ENCODE measurements at regions of chr19 and their contacts with region 1.

Region 1: GRCh38 chr19:12681074-12681951 is at the start of gene DHPS:
- DNase-seq: peak; percentile 94
- ATAC-seq: peak; percentile 90
- H3K4me3 Mint-ChIP-seq: peak within 1 kb of the TSS; percentile 99
- H3K27ac Mint-ChIP-seq: peak within 1 kb of the TSS; percentile 97
- H3K4me1 Mint-ChIP-seq: peaks cover 23% of the 10 kb centered on the region
- H3K27me3 Mint-ChIP-seq: no peaks in the 10 kb centered on the region
- total RNA-seq, gene DHPS: 101 to 112 TPM

Region 2: DNA sequence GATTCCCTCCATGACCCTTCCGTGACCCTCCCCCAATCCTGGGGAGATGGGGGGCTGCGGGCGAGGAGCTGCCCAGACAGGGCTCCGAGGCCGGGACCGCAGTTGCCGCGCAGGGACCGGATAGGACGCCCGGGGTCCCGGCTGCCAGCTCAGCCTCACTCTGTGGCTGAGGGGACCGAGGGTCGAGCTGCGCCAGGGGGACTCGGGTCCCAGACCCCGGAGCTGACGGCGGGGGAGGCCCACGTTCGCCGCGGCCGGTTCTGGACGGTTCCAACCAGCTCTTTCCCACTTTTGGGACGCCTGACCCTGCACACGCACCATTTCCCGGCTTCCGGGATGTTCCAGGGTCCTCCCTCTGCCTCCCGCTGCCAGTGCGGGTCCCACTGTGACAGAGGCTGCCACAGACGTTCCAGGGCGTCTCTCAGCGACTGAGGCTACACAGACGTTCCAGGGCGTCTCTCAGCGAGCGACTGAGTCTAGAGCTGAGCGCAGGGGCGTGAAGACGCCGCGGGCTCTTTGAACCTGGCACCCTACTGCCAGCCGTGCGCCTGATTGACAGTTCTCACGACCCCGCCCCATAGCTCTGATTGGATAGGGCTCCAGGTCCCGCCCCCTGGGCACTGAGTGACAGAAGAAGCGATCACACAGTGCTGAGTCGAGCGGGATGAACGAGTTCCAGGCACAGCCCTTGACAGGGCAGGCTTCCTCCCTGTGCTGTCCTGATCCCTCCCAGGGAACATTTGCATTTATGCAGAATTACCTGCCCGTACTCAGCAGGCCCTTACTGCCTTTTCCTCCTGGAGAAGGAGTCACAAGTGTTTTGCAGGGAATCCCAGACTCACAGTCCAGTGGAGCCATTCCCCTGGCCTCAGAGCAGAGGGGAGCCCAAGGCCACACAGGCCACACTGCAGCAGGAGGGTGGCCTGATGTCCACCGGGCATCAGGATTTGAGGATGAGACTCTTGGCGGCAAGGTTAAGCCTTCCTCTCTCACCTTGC is 347.9 kb before region 1 on chr19 and contains the start of gene ZNF563:
- CTCF ChIA-PET with region 1: no interaction called
- POLR2A ChIA-PET with region 1: no interaction called
- intact Hi-C with region 1: loop called in 1 of 2 experiments (anchors 1 kb)
- DNase-seq: peak; percentile 99
- ATAC-seq: peak; percentile 93
- H3K4me3 Mint-ChIP-seq: peak within 1 kb of the TSS; percentile 78
- H3K27ac Mint-ChIP-seq: peak within 1 kb of the TSS; percentile 98
- H3K4me1 Mint-ChIP-seq: peaks cover 32% of the 10 kb centered on the region
- H3K27me3 Mint-ChIP-seq: no peaks in the 10 kb centered on the region
- total RNA-seq, gene ZNF563: 6.6 to 6.7 TPM

Region 3: GRCh38 chr19:12610540-12611360 is 70.6 kb before region 1 on chr19 and contains the starts of genes ZNF490 and ZNF791:
- CTCF ChIA-PET with region 1: no interaction called
- POLR2A ChIA-PET with region 1: interaction called, 6 read pairs
- intact Hi-C with region 1: loop called in 1 of 2 experiments (anchors 1 kb)
- DNase-seq: peak; percentile 98
- ATAC-seq: peak; percentile 91
- H3K4me3 Mint-ChIP-seq: peak within 1 kb of the TSS; percentile 94
- H3K27ac Mint-ChIP-seq: peak within 1 kb of the TSS; percentile 99
- H3K4me1 Mint-ChIP-seq: peaks cover 31% of the 10 kb centered on the region
- H3K27me3 Mint-ChIP-seq: no peaks in the 10 kb centered on the region
- total RNA-seq, gene ZNF490: 7.7 to 8.7 TPM
- total RNA-seq, gene ZNF791: 16.1 to 18.1 TPM

Region 4: GRCh38 chr19:12696366-12697335 is 15.3 kb after region 1 on chr19 and contains the start of gene FBXW9:
- CTCF ChIA-PET with region 1: interaction called, 3 read pairs
- POLR2A ChIA-PET with region 1: interaction called, 6 read pairs
- intact Hi-C with region 1: loop called (anchors 1 kb)
- DNase-seq: peak; percentile 98
- ATAC-seq: peak; percentile 91
- H3K4me3 Mint-ChIP-seq: peak within 1 kb of the TSS; percentile 75
- H3K27ac Mint-ChIP-seq: peak within 1 kb of the TSS; percentile 94
- H3K4me1 Mint-ChIP-seq: peaks cover 11% of the 10 kb centered on the region
- H3K27me3 Mint-ChIP-seq: no peaks in the 10 kb centered on the region
- total RNA-seq, gene FBXW9: 8.3 to 8.8 TPM

Region 5: GRCh38 chr19:12796146-12797071 is 115.1 kb after region 1 on chr19:
- CTCF ChIA-PET with region 1: interaction called, 13 read pairs
- POLR2A ChIA-PET with region 1: interaction called, 13 read pairs
- intact Hi-C with region 1: loop called in 1 of 2 experiments (anchors 1 kb)
- DNase-seq: peak; percentile 87
- ATAC-seq: peak; percentile 14
- H3K4me3 Mint-ChIP-seq: peak overlapping the region; percentile 63
- H3K27ac Mint-ChIP-seq: peak overlapping the region; percentile 84
- H3K4me1 Mint-ChIP-seq: peaks cover 35% of the 10 kb centered on the region
- H3K27me3 Mint-ChIP-seq: no peaks in the 10 kb centered on the region

Region 6: GRCh38 chr19:12847159-12848139 is 166.1 kb after region 1 on chr19:
- CTCF ChIA-PET with region 1: interaction called, 4 read pairs
- POLR2A ChIA-PET with region 1: no interaction called
- intact Hi-C with region 1: loop called in 1 of 2 experiments (anchors 1 kb)
- DNase-seq: peak; percentile 94
- ATAC-seq: peak; percentile 98
- H3K4me3 Mint-ChIP-seq: peak overlapping the region; percentile 57
- H3K27ac Mint-ChIP-seq: no peak overlapping the region
- H3K4me1 Mint-ChIP-seq: peaks cover 7% of the 10 kb centered on the region
- H3K27me3 Mint-ChIP-seq: peaks cover 24% of the 10 kb centered on the region

Region 7: DNA sequence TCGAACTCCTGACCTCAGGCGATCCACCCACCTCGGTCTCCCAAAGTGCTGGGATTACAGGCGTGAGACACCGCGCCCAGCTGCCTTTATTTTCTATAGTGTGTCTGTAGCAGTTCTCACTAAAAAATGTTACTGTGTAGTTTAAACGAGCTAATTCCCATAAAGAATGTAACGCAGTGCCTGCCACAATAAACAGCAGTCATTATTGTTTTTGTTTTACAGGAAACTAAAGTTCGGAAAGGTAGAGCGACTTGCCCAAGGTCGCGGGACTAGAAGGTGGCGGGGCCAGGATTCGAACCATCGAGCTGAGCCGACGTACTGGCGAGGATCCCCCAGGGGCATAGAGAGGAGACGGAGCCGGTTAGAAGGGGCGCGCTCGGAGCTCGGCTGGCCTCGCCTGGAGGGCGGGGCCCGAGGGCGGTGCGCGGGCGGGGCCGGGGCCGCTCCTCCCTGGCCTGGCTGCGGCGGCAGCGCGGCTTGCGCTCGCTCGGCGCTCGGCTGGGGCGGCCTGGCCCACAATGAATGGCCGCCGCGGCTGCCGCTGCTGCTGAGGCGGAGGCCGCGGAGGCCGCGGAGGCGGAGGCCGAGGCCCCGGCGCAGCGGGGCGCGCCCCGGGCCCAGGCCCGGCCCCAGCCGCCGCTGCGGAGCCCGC is 436.6 kb after region 1 on chr19 and contains the start of gene NACC1:
- CTCF ChIA-PET with region 1: no interaction called
- POLR2A ChIA-PET with region 1: no interaction called
- intact Hi-C with region 1: loop called in 1 of 2 experiments (anchors 1 kb)
- DNase-seq: peak; percentile 95
- ATAC-seq: peak; percentile 85
- H3K4me3 Mint-ChIP-seq: peak within 1 kb of the TSS; percentile 87
- H3K27ac Mint-ChIP-seq: peak within 1 kb of the TSS; percentile 95
- H3K4me1 Mint-ChIP-seq: peaks cover 49% of the 10 kb centered on the region
- H3K27me3 Mint-ChIP-seq: no peaks in the 10 kb centered on the region
- total RNA-seq, gene NACC1: 77.5 to 84.5 TPM